ENCODE measurements at regions of chr19 and their contacts with region 1.

Region 1: GRCh38 chr19:38095411-38096308 is 128.4 kb downstream of the DPF1 start:
- DNase-seq: peak; percentile 70
- H3K4me3 ChIP-seq: no peak overlapping the region
- H3K27ac ChIP-seq: no peak overlapping the region
- H3K4me1 ChIP-seq: no peaks in the 10 kb centered on the region
- H3K27me3 ChIP-seq: no peaks in the 10 kb centered on the region
- CTCF ChIP-seq: peak; percentile 80

Region 2: DNA sequence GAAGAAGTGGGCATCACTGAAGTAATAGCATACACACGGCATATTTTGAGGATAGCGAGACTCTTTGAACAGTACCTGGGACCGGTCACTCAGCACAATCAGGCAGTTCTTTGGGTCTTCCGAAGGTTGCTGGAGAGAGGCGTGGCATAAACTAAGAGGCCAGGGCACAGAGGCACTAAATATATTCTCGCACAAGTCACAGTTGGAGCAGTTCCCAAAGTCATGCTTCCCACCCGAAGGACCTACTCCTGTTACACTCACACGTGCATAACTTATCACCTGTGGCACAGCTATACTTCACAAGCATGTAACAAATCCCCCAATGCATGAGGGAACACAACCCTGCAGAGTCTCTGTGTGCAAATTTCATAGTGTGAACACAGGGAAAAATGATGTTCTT is 199.5 kb before region 1 on chr19:
- CTCF ChIA-PET with region 1: interaction called, 10 read pairs
- POLR2A ChIA-PET with region 1: no interaction called
- intact Hi-C with region 1: no loop called
- DNase-seq: no peak
- H3K4me3 ChIP-seq: no peak overlapping the region
- H3K27ac ChIP-seq: no peak overlapping the region
- H3K4me1 ChIP-seq: no peaks in the 10 kb centered on the region
- H3K27me3 ChIP-seq: peaks cover 4% of the 10 kb centered on the region
- CTCF ChIP-seq: no peak

Region 3: DNA sequence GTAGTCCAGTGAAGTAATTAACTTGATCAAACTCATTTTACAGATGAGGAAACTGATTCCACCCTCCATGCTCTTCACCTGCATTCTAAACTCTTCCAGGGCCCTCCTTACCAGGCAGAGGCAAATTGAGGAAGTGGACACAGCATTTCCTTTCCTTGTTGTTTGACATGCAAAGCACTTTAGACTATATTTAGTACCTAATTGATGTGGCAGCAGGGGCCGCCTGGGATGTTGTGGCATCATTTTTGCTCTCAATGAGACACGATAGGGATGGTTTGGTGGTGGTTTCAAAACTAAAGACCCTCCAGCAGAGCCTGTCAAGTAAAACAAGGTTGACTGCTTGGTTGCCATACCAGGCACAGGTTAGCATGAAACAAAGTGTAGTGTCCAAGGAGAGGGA is 180.8 kb before region 1 on chr19:
- CTCF ChIA-PET with region 1: no interaction called
- POLR2A ChIA-PET with region 1: no interaction called
- intact Hi-C with region 1: no loop called
- DNase-seq: no peak
- H3K4me3 ChIP-seq: no peak overlapping the region
- H3K27ac ChIP-seq: no peak overlapping the region
- H3K4me1 ChIP-seq: no peaks in the 10 kb centered on the region
- H3K27me3 ChIP-seq: no peaks in the 10 kb centered on the region
- CTCF ChIP-seq: no peak

Region 4: DNA sequence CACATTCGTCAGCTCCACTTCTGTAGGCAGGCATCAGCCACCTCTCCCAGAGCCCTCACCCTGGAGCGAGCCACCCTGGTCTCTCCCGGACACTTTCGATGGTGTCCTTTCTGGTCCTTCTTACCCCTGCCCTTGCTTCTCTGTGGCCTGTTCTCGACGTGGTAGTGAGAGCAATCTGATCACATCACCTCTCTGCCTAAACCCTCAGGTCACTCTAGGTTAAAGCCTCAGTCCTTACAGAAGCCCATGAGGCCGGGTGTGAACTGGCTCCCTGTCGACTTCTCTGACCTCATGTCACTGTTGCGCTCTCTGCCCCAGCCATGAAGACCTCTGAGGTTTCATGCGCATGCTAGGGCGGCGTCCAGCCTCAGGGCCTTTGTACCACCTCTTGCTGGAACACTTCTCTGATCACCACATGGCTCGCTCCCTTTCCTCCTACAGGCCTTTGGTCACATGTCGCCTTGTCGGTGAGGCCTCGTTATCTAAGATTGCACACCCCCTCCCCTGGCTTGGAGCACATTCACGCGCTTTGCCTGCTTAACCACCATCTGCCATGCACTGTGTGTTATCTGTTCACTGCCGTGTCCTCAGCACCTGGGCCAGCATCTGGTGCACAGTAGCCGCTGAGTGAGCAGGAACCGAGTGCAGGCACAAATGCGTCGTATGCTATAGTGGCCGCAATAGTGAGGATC is 26.9 kb after region 1 on chr19:
- CTCF ChIA-PET with region 1: interaction called, 10 read pairs
- POLR2A ChIA-PET with region 1: no interaction called
- intact Hi-C with region 1: no loop called
- DNase-seq: no peak
- H3K4me3 ChIP-seq: no peak overlapping the region
- H3K27ac ChIP-seq: no peak overlapping the region
- H3K4me1 ChIP-seq: no peaks in the 10 kb centered on the region
- H3K27me3 ChIP-seq: no peaks in the 10 kb centered on the region
- CTCF ChIP-seq: no peak

Region 5: GRCh38 chr19:38425810-38426466 is 330.3 kb after region 1 on chr19 and contains the start of gene RASGRP4:
- CTCF ChIA-PET with region 1: no interaction called
- POLR2A ChIA-PET with region 1: no interaction called
- intact Hi-C with region 1: no loop called
- DNase-seq: no peak
- H3K4me3 ChIP-seq: no peak within 1 kb of the TSS
- H3K27ac ChIP-seq: no peak within 1 kb of the TSS
- H3K4me1 ChIP-seq: no peaks in the 10 kb centered on the region
- H3K27me3 ChIP-seq: peaks cover 6% of the 10 kb centered on the region
- CTCF ChIP-seq: no peak
- total RNA-seq, gene RASGRP4: not detected in 2 replicates